ENCODE measurements at regions of chr4 and their contacts with region 1.

Region 1: DNA sequence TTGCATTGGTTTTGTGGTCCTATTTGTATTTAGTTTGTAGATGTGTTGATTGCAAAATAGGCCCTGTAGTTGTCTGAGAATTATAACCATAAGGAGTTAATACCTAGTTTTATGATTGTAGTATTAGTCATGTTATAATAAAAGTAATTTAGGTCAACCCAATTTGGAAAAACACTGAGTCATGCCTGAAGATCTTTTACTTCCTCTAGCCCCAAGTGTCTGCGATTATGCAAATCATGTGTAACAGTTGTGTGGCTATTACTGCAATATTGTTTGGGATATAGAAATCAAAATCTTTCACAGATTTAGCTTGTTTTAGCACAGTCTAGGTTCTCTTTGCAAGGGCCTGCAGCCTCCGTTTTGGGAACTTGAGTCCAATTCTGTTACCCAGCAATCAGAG is 12.6 kb downstream of the SRD5A3 start:
- DNase-seq: peak in 1 of 2 experiments; percentile 84
- H3K4me3 ChIP-seq: no peak overlapping the region; the same call in 1 of the 2 replicates
- H3K27ac ChIP-seq: peak overlapping the region; percentile 85
- H3K4me1 ChIP-seq: peaks cover 54% of the 10 kb centered on the region
- H3K27me3 ChIP-seq: no peaks in the 10 kb centered on the region
- CTCF ChIP-seq: no peak

Region 2: GRCh38 chr4:53855581-53856250 is 1503.0 kb before region 1 on chr4:
- CTCF ChIA-PET with region 1: no interaction called
- POLR2A ChIA-PET with region 1: no interaction called
- intact Hi-C with region 1: no loop called
- DNase-seq: no peak
- H3K4me3 ChIP-seq: no peak overlapping the region
- H3K27ac ChIP-seq: no peak overlapping the region
- H3K4me1 ChIP-seq: no peaks in the 10 kb centered on the region
- H3K27me3 ChIP-seq: no peaks in the 10 kb centered on the region
- CTCF ChIP-seq: no peak

Region 3: DNA sequence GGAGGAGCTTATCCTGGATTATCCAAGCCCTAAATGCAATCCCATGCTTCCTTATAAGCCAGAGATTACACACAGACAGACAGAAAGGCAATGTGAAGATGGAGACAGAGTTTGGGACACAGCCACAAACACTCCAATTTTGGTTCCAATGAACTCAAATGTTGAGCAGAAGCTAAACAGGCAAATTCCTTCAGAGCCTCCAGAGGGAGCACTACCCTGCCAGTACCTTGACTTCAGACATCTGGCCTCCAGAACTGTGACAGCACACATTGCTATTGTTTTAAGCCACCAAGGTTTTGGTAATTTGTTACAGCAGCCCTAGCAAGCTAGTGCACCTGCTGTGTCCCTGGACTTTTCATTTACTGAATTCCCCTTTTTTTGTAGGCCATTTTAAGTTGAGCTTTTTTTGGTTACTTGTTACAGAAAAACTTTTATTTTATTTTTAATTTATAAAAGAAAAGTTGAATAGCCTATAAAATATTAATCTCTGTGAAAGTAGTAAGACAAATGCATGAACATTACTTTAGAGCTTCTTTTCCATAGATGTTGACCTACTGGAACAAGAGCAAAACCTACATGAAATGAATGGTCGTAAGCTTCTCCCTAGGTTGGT is 46.1 kb before region 1 on chr4:
- CTCF ChIA-PET with region 1: no interaction called
- POLR2A ChIA-PET with region 1: no interaction called
- intact Hi-C with region 1: no loop called
- DNase-seq: peak in 1 of 2 experiments; percentile 9
- H3K4me3 ChIP-seq: no peak overlapping the region
- H3K27ac ChIP-seq: no peak overlapping the region
- H3K4me1 ChIP-seq: no peaks in the 10 kb centered on the region
- H3K27me3 ChIP-seq: no peaks in the 10 kb centered on the region
- CTCF ChIP-seq: peak; percentile 59

Region 4: DNA sequence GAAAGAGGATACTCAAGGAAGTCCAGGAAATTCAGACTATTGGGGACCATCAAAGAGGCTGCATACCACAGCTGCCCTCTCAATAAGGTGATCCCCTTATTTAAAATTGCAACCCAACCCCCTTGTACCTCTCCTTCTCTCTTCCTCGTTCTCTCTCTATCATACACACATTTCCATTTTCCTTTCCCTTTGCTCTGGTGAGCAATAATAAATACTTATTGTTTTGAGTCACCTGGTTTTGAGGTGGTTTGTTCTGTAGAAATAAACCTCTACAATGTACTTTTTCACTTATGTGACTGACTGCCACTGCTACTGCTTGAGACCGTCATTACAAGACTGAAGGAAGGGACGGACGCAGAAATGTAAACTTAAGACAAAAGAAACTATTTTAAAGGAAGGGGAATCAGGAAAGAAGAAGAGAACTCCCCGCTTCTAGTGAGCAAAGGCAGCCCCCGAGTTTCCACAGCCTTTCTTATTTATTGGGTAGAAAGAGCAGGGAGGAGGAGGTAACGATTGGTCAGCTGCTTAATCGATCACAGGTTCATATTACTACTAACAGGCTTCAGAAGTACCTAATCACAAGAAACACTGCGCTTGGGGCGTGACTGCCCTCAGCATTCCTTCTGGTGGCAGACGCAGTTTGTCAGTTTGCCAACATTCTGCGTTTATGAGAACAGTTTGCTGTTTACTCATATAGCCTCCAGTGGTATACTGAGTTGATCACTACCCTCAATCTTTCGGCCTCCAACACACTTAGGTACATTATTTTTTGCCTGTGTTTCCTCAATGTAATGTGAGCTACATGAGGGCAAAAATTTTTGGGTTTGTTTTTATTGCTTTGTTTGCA is 20.2 kb after region 1 on chr4:
- CTCF ChIA-PET with region 1: no interaction called
- POLR2A ChIA-PET with region 1: no interaction called
- intact Hi-C with region 1: loop called (anchors 2 kb)
- DNase-seq: peak; percentile 61 to 92
- H3K4me3 ChIP-seq: peak overlapping the region; percentile 45; the same call in 1 of the 2 replicates
- H3K27ac ChIP-seq: peak overlapping the region; percentile 85
- H3K4me1 ChIP-seq: peaks cover 18% of the 10 kb centered on the region
- H3K27me3 ChIP-seq: no peaks in the 10 kb centered on the region
- CTCF ChIP-seq: no peak

Region 5: GRCh38 chr4:55517526-55518229 is 159.0 kb after region 1 on chr4:
- CTCF ChIA-PET with region 1: interaction called, 10 read pairs
- POLR2A ChIA-PET with region 1: no interaction called
- intact Hi-C with region 1: no loop called
- DNase-seq: no peak
- H3K4me3 ChIP-seq: no peak overlapping the region
- H3K27ac ChIP-seq: no peak overlapping the region
- H3K4me1 ChIP-seq: no peaks in the 10 kb centered on the region
- H3K27me3 ChIP-seq: no peaks in the 10 kb centered on the region
- CTCF ChIP-seq: no peak

Region 6: GRCh38 chr4:55546756-55547465 is 188.2 kb after region 1 on chr4 and contains the start of gene CLOCK:
- CTCF ChIA-PET with region 1: no interaction called
- POLR2A ChIA-PET with region 1: no interaction called
- intact Hi-C with region 1: no loop called
- DNase-seq: peak; percentile 50 to 80
- H3K4me3 ChIP-seq: peak within 1 kb of the TSS; percentile 75
- H3K27ac ChIP-seq: peak within 1 kb of the TSS; percentile 80
- H3K4me1 ChIP-seq: peaks cover 41% of the 10 kb centered on the region
- H3K27me3 ChIP-seq: no peaks in the 10 kb centered on the region
- CTCF ChIP-seq: peak; percentile 58
- total RNA-seq, gene CLOCK: 13.3 and 19.4 TPM in 2 replicates

Region 7: DNA sequence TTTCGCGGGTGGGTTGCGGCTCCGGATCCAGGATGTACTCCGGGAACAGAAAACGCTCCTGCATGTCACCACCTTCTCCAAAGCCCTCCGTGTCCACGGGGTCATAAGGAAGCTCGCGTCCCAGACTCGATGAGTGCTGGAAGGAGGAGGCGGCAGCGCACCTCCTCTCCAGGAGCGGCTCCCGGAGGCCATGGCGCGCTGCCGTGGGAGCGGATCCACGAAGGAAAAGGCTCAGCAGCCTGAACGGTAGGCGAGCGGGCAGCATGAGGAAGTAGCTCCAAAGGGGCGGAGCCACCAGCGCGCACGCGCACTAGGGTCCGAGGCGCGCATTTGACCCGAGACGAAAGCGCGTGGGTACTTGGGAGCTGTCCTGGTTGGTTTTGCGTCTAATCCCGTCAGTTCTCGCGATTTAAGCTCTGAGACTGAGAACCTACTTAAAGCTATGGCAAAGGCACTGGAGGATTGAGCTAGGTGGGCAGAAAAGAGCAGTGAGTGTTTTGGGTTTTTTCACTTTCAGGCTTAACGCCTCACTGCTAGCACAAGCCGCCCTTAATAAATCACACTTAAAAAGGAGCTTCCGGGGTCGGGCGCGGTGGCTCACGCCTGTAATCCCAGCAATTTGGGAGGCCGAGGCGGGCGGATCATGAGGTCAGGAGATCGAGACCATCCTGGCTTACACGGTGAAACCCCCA is 1618.8 kb after region 1 on chr4 and contains the start of gene NOA1:
- CTCF ChIA-PET with region 1: interaction called, 14 read pairs
- POLR2A ChIA-PET with region 1: no interaction called
- intact Hi-C with region 1: no loop called
- DNase-seq: peak; percentile 92 to 96
- H3K4me3 ChIP-seq: peak within 1 kb of the TSS; percentile 91
- H3K27ac ChIP-seq: peak within 1 kb of the TSS; percentile 84
- H3K4me1 ChIP-seq: peaks cover 25% of the 10 kb centered on the region
- H3K27me3 ChIP-seq: no peaks in the 10 kb centered on the region
- CTCF ChIP-seq: no peak
- total RNA-seq, gene NOA1: 24.1 and 25.3 TPM in 2 replicates